Activated T-helper 1 cell treated with anti-CD3 and anti-CD28 coated beads, Interleukin-12 subunit alpha, Interleukin-12 subunit beta, Interleukin-2, Interleukin-4 antibody, amounts not matched to agents 30 ng/mL and 10 ng/mL and 1 ng/mL, durations not matched to agents 14 hours and 24 hours and 36 hours (primary cell): ENCODE measurements at regions of chr5 and their contacts with region 1.

Region 1: DNA sequence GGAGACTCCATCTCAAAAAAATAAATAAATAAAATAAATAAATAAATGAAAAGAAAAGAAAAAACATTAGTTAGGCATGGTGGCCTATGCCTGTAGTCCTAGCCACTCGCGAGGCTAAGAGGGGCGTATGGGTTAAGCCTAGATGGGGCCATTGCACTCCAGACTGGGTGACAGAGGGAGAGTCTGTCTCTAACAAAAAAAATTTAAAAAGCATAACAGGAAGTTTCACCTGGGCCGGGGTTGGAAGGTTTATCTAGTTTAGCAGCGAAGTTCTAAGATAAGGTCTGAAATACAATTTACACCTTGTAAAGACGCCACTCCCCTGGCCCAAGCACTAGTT is 18.0 kb downstream of the ZMAT2 start:
- DNase-seq: no peak
- H3K4me3 Mint-ChIP-seq: peak overlapping the region; percentile 13
- H3K27ac Mint-ChIP-seq: no peak overlapping the region
- H3K4me1 Mint-ChIP-seq: peaks cover 6% of the 10 kb centered on the region
- H3K27me3 Mint-ChIP-seq: peaks cover 14% of the 10 kb centered on the region

Region 2: GRCh38 chr5:140362860-140363630 is 355.2 kb before region 1 on chr5:
- intact Hi-C with region 1: loop called (anchors 1 kb)
- DNase-seq: peak; percentile 79
- H3K4me3 Mint-ChIP-seq: peak overlapping the region; percentile 79
- H3K27ac Mint-ChIP-seq: peak overlapping the region; percentile 73
- H3K4me1 Mint-ChIP-seq: peaks cover 6% of the 10 kb centered on the region
- H3K27me3 Mint-ChIP-seq: peaks cover 2% of the 10 kb centered on the region

Region 3: DNA sequence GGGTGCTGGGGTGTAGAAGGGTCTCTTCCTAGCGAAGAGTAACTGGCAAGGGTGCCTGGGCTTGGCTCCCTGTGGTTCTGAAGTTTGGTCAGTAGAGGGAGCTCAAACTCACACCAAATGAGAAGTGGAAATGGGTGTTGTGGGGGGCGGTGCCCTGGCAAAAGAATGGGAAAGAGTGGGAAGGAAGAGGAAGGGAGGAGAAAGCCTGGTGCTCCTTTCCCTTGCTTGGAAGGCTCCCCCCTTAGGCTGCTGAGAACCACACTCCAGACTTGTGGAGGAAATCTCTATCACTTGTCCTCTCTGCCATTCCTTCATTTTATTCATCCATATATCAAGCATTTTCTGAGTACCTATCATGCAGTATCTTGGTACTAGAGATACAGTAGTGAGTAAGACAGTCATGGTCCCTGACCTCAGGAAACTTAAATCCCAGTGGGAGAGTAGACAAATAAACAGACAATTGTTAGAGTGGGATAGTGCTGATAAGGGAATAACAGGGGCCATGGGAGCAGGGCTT is 345.2 kb before region 1 on chr5:
- intact Hi-C with region 1: loop called (anchors 1 kb)
- DNase-seq: peak; percentile 21
- H3K4me3 Mint-ChIP-seq: no peak overlapping the region
- H3K27ac Mint-ChIP-seq: no peak overlapping the region
- H3K4me1 Mint-ChIP-seq: no peaks in the 10 kb centered on the region
- H3K27me3 Mint-ChIP-seq: no peaks in the 10 kb centered on the region

Region 4: GRCh38 chr5:140690941-140691924 is 27.0 kb before region 1 on chr5 and contains the starts of genes HARS1 and HARS2:
- intact Hi-C with region 1: no loop called
- DNase-seq: peak; percentile 81
- H3K4me3 Mint-ChIP-seq: peak within 1 kb of the TSS; percentile 100
- H3K27ac Mint-ChIP-seq: peak within 1 kb of the TSS; percentile 95
- H3K4me1 Mint-ChIP-seq: peaks cover 50% of the 10 kb centered on the region
- H3K27me3 Mint-ChIP-seq: no peaks in the 10 kb centered on the region
- total RNA-seq, gene HARS1: 112 and 114 TPM in 2 replicates
- total RNA-seq, gene HARS2: 31.2 and 32.7 TPM in 2 replicates